Aorta (tissue), 5 donors: ENCODE measurements at regions of chr10 and their contacts with region 1.

Region 1: GRCh38 chr10:124262234-124262865 is 156.4 kb downstream of the OAT start:
- DNase-seq: peak in 1 of 2 donors; percentile 64
- ATAC-seq: peak; percentile 6
- H3K4me3 ChIP-seq: no peak overlapping the region
- H3K27ac ChIP-seq: no peak overlapping the region
- H3K4me1 ChIP-seq: no peaks in the 10 kb centered on the region
- H3K27me3 ChIP-seq: no peaks in the 10 kb centered on the region

Region 2: DNA sequence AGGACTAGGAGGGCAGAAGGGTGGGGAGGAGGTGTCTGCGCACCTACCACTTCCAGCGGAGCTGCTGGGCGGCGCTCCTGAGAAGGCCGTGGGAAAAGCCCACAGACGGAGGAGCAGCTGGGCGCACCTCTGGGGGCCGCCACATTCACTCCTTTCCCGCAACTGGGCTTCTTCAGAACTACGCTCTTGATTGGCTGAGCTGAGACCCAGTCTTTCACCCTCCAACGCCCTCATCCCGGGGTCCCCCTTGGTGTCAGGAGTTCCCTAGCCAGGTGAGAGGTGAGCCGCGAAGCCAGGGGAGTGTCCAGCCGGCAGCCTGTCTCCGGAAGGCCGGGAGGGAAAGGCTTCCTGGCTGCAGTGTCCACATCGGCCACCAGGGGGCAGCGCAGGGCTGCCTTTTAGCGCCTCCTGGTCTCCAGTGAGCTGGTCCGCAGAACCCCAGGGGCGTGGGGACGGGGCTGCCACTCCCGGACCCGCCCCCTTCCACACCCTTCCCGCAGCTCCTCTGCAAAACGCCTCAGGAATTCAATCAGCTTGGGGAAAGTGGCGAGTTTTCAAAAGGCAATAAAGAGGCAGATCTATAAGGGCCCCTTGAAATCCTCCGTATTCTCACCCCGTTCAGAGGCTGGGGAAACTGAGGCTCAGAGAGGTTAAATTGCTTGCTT is 267.8 kb before region 1 on chr10:
- intact Hi-C with region 1: loop called in 1 of 2 experiments (anchors 2 kb)
- DNase-seq: peak; percentile 91 to 96
- ATAC-seq: peak; percentile 93
- H3K4me3 ChIP-seq: no peak overlapping the region
- H3K27ac ChIP-seq: no peak overlapping the region
- H3K4me1 ChIP-seq: no peaks in the 10 kb centered on the region
- H3K27me3 ChIP-seq: peaks cover 0 to 3% of the 10 kb centered on the region in 2 donors

Region 3: GRCh38 chr10:124000792-124001201 is 261.6 kb before region 1 on chr10:
- intact Hi-C with region 1: loop called (anchors 2 to 5 kb)
- DNase-seq: no peak
- ATAC-seq: no peak
- H3K4me3 ChIP-seq: no peak overlapping the region
- H3K27ac ChIP-seq: no peak overlapping the region
- H3K4me1 ChIP-seq: no peaks in the 10 kb centered on the region
- H3K27me3 ChIP-seq: no peaks in the 10 kb centered on the region